Activated CD4-positive, alpha-beta memory T cell treated with anti-CD3 and anti-CD28 coated beads for 36 hours (primary cell): ENCODE measurements at regions of chr17 and their contacts with region 1.

Region 1: GRCh38 chr17:3683054-3683511 is 12.9 kb downstream of the P2RX5 start:
- DNase-seq: peak; percentile 73
- H3K4me3 Mint-ChIP-seq: no peak overlapping the region
- H3K27ac Mint-ChIP-seq: no peak overlapping the region
- H3K4me1 Mint-ChIP-seq: peaks cover 17% of the 10 kb centered on the region
- H3K27me3 Mint-ChIP-seq: no peaks in the 10 kb centered on the region

Region 2: GRCh38 chr17:3529817-3530741 is 153.0 kb before region 1 on chr17:
- CTCF ChIA-PET with region 1: no interaction called
- POLR2A ChIA-PET with region 1: no interaction called
- intact Hi-C with region 1: no loop called
- DNase-seq: no peak
- H3K4me3 Mint-ChIP-seq: no peak overlapping the region
- H3K27ac Mint-ChIP-seq: no peak overlapping the region
- H3K4me1 Mint-ChIP-seq: peaks cover 4% of the 10 kb centered on the region
- H3K27me3 Mint-ChIP-seq: peaks cover 1% of the 10 kb centered on the region

Region 3: DNA sequence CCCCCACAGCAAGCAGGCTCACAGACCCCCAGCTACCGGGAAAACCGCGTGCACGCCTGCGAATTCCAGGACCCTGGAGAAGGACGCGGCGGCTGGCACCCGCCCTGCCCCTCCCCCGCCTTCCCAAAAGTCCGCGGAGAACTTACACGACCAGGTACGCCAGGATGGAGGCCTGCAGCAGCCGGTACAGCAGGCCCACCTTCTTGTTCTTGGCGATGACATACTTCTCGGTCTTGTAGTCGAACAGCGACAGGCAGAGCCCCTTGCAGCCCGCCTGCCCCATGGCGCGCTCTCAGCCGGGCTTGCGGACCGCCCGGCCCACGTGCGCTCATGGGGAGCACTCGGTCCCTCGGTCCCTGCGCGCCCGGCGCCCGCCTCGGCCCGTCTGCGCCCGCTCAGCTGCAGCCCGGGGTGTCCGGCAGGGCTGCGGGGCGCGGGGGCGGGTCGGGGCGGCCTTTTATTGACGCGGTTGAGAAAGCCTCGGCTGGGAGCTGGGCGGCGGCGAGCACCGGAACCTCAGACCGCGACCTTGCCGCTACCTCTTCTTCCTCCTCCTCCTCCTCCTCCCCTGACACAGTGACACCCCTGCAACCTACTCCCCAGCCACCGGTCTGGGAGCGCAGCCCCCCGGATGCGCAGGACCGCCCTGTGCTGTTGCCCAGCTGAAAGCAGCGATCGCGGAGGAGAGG is 12.8 kb after region 1 on chr17 and contains the start of gene P2RX5:
- CTCF ChIA-PET with region 1: interaction called, 23 read pairs
- POLR2A ChIA-PET with region 1: no interaction called
- intact Hi-C with region 1: no loop called
- DNase-seq: peak; percentile 56
- H3K4me3 Mint-ChIP-seq: peak within 1 kb of the TSS; percentile 87
- H3K27ac Mint-ChIP-seq: peak within 1 kb of the TSS; percentile 76
- H3K4me1 Mint-ChIP-seq: peaks cover 20% of the 10 kb centered on the region
- H3K27me3 Mint-ChIP-seq: no peaks in the 10 kb centered on the region
- total RNA-seq, gene P2RX5: 37.6 to 43.2 TPM

Region 4: DNA sequence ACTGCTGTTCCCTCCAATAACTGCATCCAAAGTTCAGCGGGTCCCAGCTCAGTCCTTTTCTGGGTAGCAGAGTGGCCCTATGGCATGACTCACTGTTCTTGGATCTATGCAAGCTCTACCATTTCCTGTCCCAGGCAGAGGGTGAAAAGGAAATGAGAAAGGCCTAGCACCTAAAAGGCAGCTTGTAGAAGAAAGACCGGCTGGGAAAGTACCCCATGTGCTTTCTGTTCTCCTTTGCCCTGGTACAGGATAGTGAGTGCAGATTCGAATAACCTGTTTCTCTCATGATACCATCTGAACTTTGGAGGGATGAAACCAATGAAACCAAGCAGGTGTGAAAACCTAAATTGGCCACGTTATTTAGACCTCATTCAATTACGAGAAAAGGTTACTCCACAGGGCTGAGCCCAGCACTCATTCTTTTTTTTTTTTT is 27.9 kb after region 1 on chr17:
- CTCF ChIA-PET with region 1: interaction called, 13 read pairs
- POLR2A ChIA-PET with region 1: no interaction called
- intact Hi-C with region 1: no loop called
- DNase-seq: peak; percentile 85
- H3K4me3 Mint-ChIP-seq: peak overlapping the region; percentile 49
- H3K27ac Mint-ChIP-seq: peak overlapping the region; percentile 83
- H3K4me1 Mint-ChIP-seq: peaks cover 48% of the 10 kb centered on the region
- H3K27me3 Mint-ChIP-seq: no peaks in the 10 kb centered on the region

Region 5: DNA sequence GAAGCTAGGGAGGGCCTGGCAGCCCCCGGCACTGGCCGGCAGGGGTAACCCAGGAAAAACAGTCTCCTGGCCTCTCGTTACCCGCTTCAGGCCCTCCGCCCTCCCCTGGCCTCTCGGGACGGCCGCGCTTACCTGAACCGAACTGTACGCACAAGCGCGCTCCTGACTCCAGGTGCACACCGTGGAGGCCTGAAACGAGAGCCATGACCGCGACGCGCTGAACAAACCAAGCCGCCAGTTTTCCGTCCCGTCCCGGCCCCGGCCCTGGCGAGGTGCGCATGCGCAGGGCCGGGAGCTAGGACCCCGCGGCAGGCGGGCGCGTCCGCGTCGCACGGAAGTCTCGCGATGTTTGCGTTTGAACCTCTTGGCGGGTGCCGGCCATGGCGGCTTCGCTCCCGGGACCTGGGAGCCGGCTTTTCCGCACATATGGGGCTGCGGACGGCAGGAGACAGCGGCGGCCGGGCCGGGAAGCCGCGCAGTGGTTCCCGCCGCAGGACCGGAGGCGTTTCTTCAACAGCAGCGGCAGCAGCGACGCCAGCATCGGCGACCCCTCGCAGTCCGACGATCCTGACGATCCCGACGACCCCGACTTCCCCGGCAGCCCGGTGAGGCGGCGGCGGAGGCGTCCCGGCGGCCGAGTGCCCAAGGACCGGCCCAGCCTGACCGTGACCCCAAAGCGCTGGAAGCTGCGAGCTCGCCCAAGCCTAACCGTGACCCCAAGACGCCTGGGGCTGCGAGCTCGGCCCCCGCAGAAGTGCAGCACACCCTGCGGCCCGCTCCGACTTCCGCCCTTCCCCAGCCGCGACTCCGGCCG is 40.7 kb after region 1 on chr17 and contains the start of gene HASPIN:
- CTCF ChIA-PET with region 1: interaction called, 29 read pairs
- POLR2A ChIA-PET with region 1: no interaction called
- intact Hi-C with region 1: loop called (anchors 2 kb)
- DNase-seq: peak; percentile 95
- H3K4me3 Mint-ChIP-seq: peak within 1 kb of the TSS; percentile 97
- H3K27ac Mint-ChIP-seq: peak within 1 kb of the TSS; percentile 90
- H3K4me1 Mint-ChIP-seq: peaks cover 54% of the 10 kb centered on the region
- H3K27me3 Mint-ChIP-seq: no peaks in the 10 kb centered on the region
- total RNA-seq, gene HASPIN: 22.0 to 22.7 TPM

Region 6: DNA sequence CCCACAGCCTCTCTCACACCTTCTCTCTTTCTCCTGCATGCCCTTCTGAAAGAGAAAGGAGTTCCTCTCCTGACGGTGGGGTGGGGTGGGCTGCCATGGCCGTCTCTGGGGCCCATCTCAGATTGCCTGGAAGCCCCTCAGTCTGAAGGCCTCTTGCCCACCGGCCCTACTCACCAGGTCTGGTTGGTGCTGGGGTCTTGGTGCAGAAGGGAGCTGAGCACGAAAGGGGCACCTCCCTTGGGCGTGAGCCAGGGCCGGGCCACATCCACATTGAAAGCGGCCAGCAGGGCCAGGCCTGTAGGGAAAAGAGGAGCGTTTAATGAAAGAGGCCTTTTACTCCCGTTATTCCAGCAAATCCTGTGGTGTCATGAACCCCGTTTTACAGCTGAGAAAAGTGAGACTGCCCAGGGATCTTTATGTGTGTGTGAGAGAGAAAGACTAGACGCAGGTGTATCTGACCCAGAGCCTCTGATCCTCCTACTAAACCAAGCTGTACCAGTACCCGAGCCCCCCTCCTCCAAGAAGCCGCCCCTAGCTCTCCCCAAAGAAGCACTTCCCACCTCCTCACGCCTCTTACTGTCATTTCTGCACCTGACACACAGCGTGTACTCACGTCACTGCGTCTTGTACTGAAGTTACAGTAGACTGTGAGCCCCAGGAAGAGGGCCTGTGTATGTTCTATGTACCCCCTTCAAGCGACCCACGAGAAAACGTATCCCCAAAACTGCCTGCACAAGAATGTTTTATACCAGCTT is 94.5 kb after region 1 on chr17:
- CTCF ChIA-PET with region 1: no interaction called
- POLR2A ChIA-PET with region 1: no interaction called
- intact Hi-C with region 1: no loop called
- DNase-seq: no peak
- H3K4me3 Mint-ChIP-seq: no peak overlapping the region
- H3K27ac Mint-ChIP-seq: no peak overlapping the region
- H3K4me1 Mint-ChIP-seq: no peaks in the 10 kb centered on the region
- H3K27me3 Mint-ChIP-seq: no peaks in the 10 kb centered on the region

Region 7: GRCh38 chr17:3827124-3827773 is 144.2 kb after region 1 on chr17:
- CTCF ChIA-PET with region 1: interaction called, 12 read pairs
- POLR2A ChIA-PET with region 1: no interaction called
- intact Hi-C with region 1: loop called (anchors 2 kb)
- DNase-seq: peak; percentile 72
- H3K4me3 Mint-ChIP-seq: no peak overlapping the region
- H3K27ac Mint-ChIP-seq: no peak overlapping the region
- H3K4me1 Mint-ChIP-seq: no peaks in the 10 kb centered on the region
- H3K27me3 Mint-ChIP-seq: no peaks in the 10 kb centered on the region